Sigmoid colon (tissue), 7 donors: ENCODE measurements at regions of chr11 and their contacts with region 1.

Region 1: DNA sequence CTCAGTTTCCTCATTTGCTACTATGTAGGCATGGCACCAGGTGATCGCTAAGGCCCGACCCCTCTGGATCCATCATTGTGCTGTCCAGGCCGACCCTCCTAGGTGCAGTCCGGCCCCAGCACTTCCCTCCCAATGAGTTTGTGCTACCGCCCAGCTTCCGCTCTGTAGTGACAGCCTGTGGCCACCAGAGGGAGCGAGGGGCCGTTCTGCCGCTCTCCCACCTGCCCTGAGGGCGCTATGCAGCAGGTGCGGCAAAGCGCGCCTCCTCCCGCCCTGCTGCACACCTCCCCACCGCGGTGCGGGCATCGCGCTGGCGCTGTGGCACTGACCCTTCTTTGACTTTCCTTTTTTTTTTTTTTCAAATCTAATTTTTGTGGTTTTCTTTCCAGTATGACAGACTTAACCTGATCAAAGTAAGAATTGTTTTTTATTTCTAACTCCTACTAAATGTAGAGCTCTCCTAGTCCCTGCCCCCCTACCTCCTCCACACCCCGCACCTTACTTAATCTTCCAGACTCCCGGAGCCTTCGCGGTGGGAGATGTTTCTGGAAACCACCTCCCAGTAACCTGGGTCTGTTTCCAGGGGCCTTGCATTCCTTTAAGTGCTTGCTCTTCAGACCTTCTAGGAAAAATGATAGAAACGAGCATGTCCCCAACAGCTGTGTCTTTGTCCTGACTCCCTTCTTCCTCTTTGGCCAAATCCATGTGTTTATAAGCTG is 73.7 kb downstream of the SCN3B start:
- DNase-seq: no peak
- H3K4me3 ChIP-seq: no peak overlapping the region
- H3K27ac ChIP-seq: no peak overlapping the region
- H3K4me1 ChIP-seq: peaks cover 0 to 5% (median 2%) of the 10 kb centered on the region in 4 donors
- H3K27me3 ChIP-seq: peaks cover 0 to 10% (median 0%) of the 10 kb centered on the region in 3 donors
- CTCF ChIP-seq: peak; percentile 61 to 91 (median 79)
- EP300 ChIP-seq: no peak
- POLR2A ChIP-seq: no peak

Region 2: GRCh38 chr11:123282597-123282996 is 298.1 kb before region 1 on chr11:
- intact Hi-C with region 1: loop called (anchors 5 kb)
- DNase-seq: no peak
- H3K4me3 ChIP-seq: no peak overlapping the region
- H3K27ac ChIP-seq: no peak overlapping the region
- H3K4me1 ChIP-seq: no peaks in the 10 kb centered on the region
- H3K27me3 ChIP-seq: peaks cover 0 to 12% (median 0%) of the 10 kb centered on the region in 3 donors
- CTCF ChIP-seq: no peak
- EP300 ChIP-seq: no peak
- POLR2A ChIP-seq: no peak

Region 3: DNA sequence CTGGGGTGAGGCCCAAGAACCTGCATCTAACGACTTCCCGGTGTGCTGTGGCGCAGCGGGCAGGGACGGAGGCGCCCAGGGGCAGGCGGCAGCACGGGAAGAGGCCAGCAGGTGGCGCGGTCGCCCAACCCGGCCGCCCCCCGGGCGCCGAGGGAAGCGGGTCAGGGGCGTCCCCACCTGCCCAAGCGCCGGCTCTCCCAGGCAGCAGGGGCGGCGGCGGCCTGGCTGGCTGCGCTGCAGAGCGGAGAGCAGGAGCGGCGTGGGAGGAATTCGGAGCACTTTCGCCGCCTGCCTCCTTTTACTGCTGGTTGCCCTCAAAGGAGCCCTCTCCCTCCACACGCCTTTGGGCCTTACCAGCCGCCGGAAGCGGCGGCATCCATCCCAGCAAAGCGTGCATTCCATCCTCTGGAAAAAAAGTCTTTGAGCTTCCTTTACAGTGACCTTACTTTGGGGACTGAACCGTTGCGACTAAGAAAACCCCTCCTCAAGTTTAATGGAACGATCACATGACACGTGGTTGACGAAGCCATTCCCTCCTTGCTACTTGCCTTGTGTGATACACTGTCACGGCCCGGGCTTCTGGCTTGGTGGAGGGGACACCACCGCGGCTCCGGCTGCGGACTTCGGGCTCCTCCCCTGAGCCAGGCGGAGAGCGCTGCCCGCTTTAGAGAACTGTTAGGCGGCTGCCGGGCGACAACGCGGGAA is 278.9 kb before region 1 on chr11:
- intact Hi-C with region 1: loop called (anchors 10 kb)
- DNase-seq: peak; percentile 69
- H3K4me3 ChIP-seq: peak overlapping the region in 3 of 4 donors; percentile 36 to 50 (median 50)
- H3K27ac ChIP-seq: peak overlapping the region in 1 of 4 donors; percentile 22
- H3K4me1 ChIP-seq: peaks cover 0 to 13% (median 12%) of the 10 kb centered on the region in 4 donors
- H3K27me3 ChIP-seq: peaks cover 0 to 24% (median 0%) of the 10 kb centered on the region in 3 donors
- CTCF ChIP-seq: peak; percentile 32 to 96 (median 48)
- EP300 ChIP-seq: no peak
- POLR2A ChIP-seq: no peak

Region 4: DNA sequence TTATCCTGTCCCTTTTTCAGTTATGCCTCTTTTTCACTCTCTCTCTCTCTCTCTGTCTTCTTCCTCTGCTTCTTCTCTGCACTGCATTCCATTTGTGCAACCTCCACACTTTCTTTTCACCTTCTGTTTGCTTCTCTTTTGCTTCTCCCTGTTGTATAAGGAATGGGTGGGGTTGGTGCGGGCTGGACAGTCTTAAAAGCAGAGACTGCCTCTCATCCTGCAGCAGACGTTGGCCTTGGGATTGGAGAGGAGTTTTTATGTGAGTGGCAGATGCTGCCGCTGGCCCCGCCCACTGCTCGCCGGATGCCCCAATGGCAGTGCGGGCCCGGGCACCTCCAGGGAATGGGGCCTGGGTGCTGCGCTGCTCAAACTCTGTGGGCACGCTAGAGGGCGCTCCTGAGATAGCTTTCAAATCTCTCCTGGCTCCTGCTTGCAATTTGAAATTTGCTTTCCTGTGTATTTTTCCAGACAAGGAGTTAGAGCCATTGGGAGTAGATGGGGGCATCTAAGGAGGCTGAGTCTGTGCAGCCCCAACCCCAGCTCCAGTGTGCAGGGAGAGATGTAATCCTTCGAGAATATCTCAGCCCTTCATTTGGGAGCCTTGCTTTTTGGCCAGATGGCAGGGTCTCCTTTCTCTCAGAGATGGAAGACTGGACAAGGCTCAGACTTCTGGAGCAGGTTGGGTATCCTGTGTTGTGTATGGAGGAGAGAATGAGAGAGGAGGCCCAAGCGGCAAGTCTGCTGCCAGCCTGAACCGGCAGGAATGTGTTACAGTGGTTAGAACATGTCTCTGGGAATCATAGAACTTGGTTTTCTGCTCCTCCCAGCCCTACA is 69.5 kb before region 1 on chr11:
- intact Hi-C with region 1: loop called (anchors 1 kb)
- DNase-seq: peak; percentile 80
- H3K4me3 ChIP-seq: no peak overlapping the region
- H3K27ac ChIP-seq: no peak overlapping the region
- H3K4me1 ChIP-seq: no peaks in the 10 kb centered on the region
- H3K27me3 ChIP-seq: no peaks in the 10 kb centered on the region
- CTCF ChIP-seq: peak in 3 of 4 experiments; percentile 56 to 87 (median 64)
- EP300 ChIP-seq: no peak
- POLR2A ChIP-seq: no peak

Region 5: DNA sequence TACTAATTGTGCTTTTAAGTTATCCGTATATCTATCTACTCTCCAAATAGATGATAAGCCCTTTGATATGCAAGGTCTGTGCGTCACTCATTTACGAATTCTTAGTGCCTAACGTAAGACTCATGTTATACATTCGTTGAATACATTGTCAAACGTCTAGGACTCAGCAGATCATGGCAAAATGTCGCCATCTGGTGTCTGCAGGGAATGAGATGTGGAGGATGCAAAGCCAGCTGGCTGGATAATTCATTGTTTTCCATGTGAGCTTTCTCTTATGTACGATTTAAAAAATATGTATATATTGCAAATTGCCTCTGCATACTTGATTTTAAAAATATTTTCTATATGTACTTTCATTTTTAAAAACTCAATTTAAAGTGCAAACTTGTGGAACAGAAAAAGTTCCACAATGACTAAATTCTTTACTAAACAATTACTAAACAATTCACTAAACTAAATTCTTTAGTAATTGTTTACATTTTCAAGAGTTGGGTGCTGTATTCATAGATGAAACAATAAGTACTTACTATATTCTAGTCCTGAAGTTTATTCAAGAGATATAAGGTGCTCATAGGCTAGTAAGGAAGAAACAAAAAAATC is 127.0 kb after region 1 on chr11:
- intact Hi-C with region 1: loop called (anchors 1 kb)
- DNase-seq: no peak
- H3K4me3 ChIP-seq: no peak overlapping the region
- H3K27ac ChIP-seq: no peak overlapping the region
- H3K4me1 ChIP-seq: no peaks in the 10 kb centered on the region
- H3K27me3 ChIP-seq: peaks cover 0 to 2% (median 0%) of the 10 kb centered on the region in 3 donors
- CTCF ChIP-seq: peak; percentile 23 to 54 (median 36)
- EP300 ChIP-seq: no peak
- POLR2A ChIP-seq: no peak